ENCODE measurements at regions of chrX and their contacts with region 1.

Region 1: DNA sequence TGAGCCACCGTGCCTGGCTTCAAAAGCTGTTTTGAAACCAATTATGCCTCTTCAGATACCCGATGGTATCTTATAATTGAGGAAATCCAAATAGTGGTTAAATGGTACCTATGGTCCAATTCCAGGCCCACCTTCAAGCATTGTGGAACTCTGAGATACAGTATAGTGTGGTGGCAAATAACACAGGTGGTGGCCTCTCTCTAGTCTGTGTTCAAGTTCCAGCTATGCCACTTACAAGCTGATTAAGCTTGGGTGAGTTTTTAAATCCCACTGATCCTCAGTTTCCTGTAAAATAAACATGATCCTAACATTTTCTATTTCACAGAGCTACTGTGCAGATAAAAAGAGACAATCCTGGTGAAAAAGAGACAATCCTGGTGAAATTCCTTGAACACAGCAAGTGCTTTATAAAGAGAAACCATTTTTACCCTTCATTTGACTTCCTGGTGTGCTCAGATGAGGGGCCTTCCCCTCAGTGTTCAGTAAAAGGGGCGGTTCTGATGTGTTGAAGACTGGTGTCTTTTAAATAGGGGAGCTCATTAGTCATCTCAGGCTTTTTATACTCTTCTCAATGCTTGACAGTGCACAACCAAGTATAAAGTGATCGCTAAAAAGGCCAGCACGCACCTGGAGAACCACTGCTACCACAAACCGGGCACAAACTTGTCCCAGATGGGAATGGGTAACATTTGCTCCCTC is 30.8 kb upstream of the CD40LG start:
- DNase-seq: peak; percentile 34
- H3K4me3 Mint-ChIP-seq: no peak overlapping the region
- H3K27ac Mint-ChIP-seq: peak overlapping the region; percentile 82
- H3K4me1 Mint-ChIP-seq: peaks cover 73% of the 10 kb centered on the region
- H3K27me3 Mint-ChIP-seq: no peaks in the 10 kb centered on the region

Region 2: GRCh38 chrX:136214551-136214950 is 402.6 kb before region 1 on chrX:
- CTCF ChIA-PET with region 1: no interaction called
- POLR2A ChIA-PET with region 1: no interaction called
- DNase-seq: no peak
- H3K4me3 Mint-ChIP-seq: no peak overlapping the region
- H3K27ac Mint-ChIP-seq: no peak overlapping the region
- H3K4me1 Mint-ChIP-seq: peaks cover 10% of the 10 kb centered on the region
- H3K27me3 Mint-ChIP-seq: no peaks in the 10 kb centered on the region

Region 3: GRCh38 chrX:136584545-136584944 is 32.6 kb before region 1 on chrX:
- CTCF ChIA-PET with region 1: no interaction called
- POLR2A ChIA-PET with region 1: no interaction called
- DNase-seq: no peak
- H3K4me3 Mint-ChIP-seq: no peak overlapping the region
- H3K27ac Mint-ChIP-seq: peak overlapping the region; percentile 97
- H3K4me1 Mint-ChIP-seq: peaks cover 54% of the 10 kb centered on the region
- H3K27me3 Mint-ChIP-seq: no peaks in the 10 kb centered on the region

Region 4: GRCh38 chrX:136627409-136627808 is 10.3 kb after region 1 on chrX:
- CTCF ChIA-PET with region 1: interaction called, 17 read pairs
- POLR2A ChIA-PET with region 1: interaction called, 7 read pairs
- DNase-seq: peak; percentile 47
- H3K4me3 Mint-ChIP-seq: peak overlapping the region; percentile 47
- H3K27ac Mint-ChIP-seq: peak overlapping the region; percentile 88
- H3K4me1 Mint-ChIP-seq: peaks cover 95% of the 10 kb centered on the region
- H3K27me3 Mint-ChIP-seq: no peaks in the 10 kb centered on the region

Measured in activated CD4-positive, alpha-beta T cell treated with anti-CD3 and anti-CD28 coated beads, Interleukin-2, amount 10 ng/mL, durations not matched to agents 7 days and 5 days (primary cell).